H1 (cell line): ENCODE measurements at regions of chr11 and their contacts with region 1.

Region 1: GRCh38 chr11:86041975-86042378 is 26.9 kb downstream of the PICALM start:
- DNase-seq: peak; percentile 44 to 62
- H3K4me3 ChIP-seq: no peak overlapping the region
- H3K27ac ChIP-seq: no peak overlapping the region
- H3K4me1 ChIP-seq: peaks cover 0 to 4% (median 0%) of the 10 kb centered on the region in 4 experiments; a peak in 1 of 7 replicates
- H3K27me3 ChIP-seq: no peaks in the 10 kb centered on the region
- CTCF ChIP-seq: peak in 2 of 3 experiments; percentile 71 to 77; a peak in 3 of 4 replicates
- EP300 ChIP-seq: no peak
- POLR2A ChIP-seq: no peak
- RAD21 ChIP-seq: peak; percentile 75 to 79

Region 2: GRCh38 chr11:86013713-86014112 is 28.3 kb before region 1 on chr11:
- CTCF ChIA-PET with region 1: no interaction called
- POLR2A ChIA-PET with region 1: no interaction called
- DNase-seq: no peak
- H3K4me3 ChIP-seq: no peak overlapping the region
- H3K27ac ChIP-seq: no peak overlapping the region
- H3K4me1 ChIP-seq: no peaks in the 10 kb centered on the region
- H3K27me3 ChIP-seq: no peaks in the 10 kb centered on the region
- CTCF ChIP-seq: no peak
- EP300 ChIP-seq: no peak
- POLR2A ChIP-seq: no peak
- RAD21 ChIP-seq: no peak

Region 3: GRCh38 chr11:86052693-86053641 is 11.0 kb after region 1 on chr11:
- CTCF ChIA-PET with region 1: interaction called, 24 read pairs
- POLR2A ChIA-PET with region 1: no interaction called
- DNase-seq: no peak
- H3K4me3 ChIP-seq: no peak overlapping the region
- H3K27ac ChIP-seq: no peak overlapping the region
- H3K4me1 ChIP-seq: no peaks in the 10 kb centered on the region
- H3K27me3 ChIP-seq: no peaks in the 10 kb centered on the region
- CTCF ChIP-seq: no peak
- EP300 ChIP-seq: no peak
- POLR2A ChIP-seq: no peak
- RAD21 ChIP-seq: no peak

Region 4: GRCh38 chr11:86097980-86098379 is 56.0 kb after region 1 on chr11:
- CTCF ChIA-PET with region 1: no interaction called
- POLR2A ChIA-PET with region 1: no interaction called
- DNase-seq: no peak
- H3K4me3 ChIP-seq: no peak overlapping the region
- H3K27ac ChIP-seq: no peak overlapping the region
- H3K4me1 ChIP-seq: no peaks in the 10 kb centered on the region
- H3K27me3 ChIP-seq: no peaks in the 10 kb centered on the region
- CTCF ChIP-seq: no peak
- EP300 ChIP-seq: no peak
- POLR2A ChIP-seq: no peak
- RAD21 ChIP-seq: no peak